ENCODE measurements at regions of chr10 and their contacts with region 1.

Region 1: DNA sequence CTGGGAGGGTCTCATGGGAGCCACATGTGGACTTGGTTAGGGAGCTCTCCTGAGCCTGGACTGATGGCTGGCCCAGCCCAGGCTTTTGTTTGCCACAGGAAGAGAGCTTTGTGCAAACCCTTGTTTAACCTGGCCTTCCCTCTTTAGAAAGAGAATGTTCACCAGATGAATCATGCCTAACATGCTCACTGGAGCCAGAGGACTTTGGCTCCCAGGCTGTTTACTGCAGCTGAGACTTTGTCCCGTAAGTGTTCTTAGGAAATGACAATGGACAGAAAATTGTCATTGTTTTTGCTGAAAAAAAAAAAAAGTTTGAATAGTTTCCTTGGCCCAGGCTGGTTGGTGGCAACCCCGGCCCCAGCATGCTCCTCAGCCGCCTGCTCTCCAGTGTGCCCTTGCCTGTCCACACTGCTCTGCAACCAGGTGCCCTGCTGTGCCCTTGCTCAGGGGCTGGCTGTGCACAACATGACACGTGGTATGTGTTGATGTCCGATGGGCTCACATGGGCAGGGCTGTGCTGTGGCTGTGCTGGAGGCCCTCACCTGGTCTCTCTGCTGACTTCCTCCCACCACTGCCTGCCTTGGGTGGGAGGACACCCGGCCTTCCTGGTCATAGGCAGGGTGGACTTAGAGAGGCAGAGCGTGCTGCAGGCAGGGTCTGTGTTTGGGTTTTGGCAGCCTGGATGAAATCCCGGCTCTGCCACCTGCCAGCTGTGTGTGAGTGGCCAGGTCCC is 215.3 kb upstream of the ZNF32 start:
- DNase-seq: peak; percentile 44 to 64
- ATAC-seq: peak; percentile 64 to 88 (median 85)
- H3K4me3 ChIP-seq: no peak overlapping the region
- H3K27ac ChIP-seq: peak overlapping the region; percentile 60 to 96 (median 84)
- H3K4me1 ChIP-seq: peaks cover 13 to 88% (median 40%) of the 10 kb centered on the region in 9 donors
- H3K27me3 ChIP-seq: no peaks in the 10 kb centered on the region
- CTCF ChIP-seq: no peak

Region 2: GRCh38 chr10:43728425-43728824 is 135.6 kb before region 1 on chr10:
- intact Hi-C with region 1: no loop called
- DNase-seq: no peak
- ATAC-seq: no peak
- H3K4me3 ChIP-seq: no peak overlapping the region
- H3K27ac ChIP-seq: no peak overlapping the region
- H3K4me1 ChIP-seq: no peaks in the 10 kb centered on the region
- H3K27me3 ChIP-seq: no peaks in the 10 kb centered on the region
- CTCF ChIP-seq: no peak

Region 3: DNA sequence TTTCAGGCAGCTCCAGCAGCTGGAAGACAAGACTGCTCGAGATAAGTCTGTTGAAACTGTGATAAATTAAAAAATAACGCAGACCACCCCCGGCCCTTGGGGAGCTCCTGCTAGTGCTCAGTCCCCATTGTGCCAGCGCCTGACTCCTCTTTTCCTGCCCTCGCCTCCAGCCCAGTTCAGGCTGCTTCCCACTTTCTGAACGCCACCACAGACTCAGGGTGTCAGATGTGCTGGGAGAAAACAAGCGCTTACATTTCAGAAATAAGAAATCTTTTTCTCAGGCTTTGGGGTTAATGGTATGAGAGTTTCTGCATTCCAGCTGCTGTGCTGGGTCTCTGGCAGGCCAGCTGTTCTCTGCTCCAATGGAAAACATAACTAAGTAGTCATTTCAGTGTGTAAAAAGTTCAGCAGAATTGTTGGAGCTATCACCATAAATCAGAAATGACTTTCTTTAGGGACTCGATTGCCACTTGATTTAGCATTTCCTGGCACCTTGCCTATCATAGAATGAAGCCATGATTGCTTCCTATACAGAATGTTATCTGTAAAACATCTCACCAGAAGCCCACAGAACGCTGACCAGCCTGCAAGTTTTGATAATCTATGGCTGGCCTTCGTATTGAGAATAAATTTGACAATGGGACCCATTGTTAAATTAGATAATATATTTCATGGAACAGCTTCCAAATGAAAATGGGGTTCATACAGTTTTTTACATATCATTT is 41.6 kb after region 1 on chr10:
- intact Hi-C with region 1: loop called in 1 of 10 experiments (anchors 5 kb)
- DNase-seq: peak; percentile 43 to 65
- ATAC-seq: peak; percentile 50 to 71 (median 61)
- H3K4me3 ChIP-seq: no peak overlapping the region
- H3K27ac ChIP-seq: peak overlapping the region in 9 of 10 donors; percentile 47 to 85 (median 64)
- H3K4me1 ChIP-seq: peaks cover 12 to 51% (median 32%) of the 10 kb centered on the region in 9 donors
- H3K27me3 ChIP-seq: no peaks in the 10 kb centered on the region
- CTCF ChIP-seq: no peak